Tibial artery (tissue), 4 donors: ENCODE measurements at regions of chr16 and their contacts with region 1.

Region 1: DNA sequence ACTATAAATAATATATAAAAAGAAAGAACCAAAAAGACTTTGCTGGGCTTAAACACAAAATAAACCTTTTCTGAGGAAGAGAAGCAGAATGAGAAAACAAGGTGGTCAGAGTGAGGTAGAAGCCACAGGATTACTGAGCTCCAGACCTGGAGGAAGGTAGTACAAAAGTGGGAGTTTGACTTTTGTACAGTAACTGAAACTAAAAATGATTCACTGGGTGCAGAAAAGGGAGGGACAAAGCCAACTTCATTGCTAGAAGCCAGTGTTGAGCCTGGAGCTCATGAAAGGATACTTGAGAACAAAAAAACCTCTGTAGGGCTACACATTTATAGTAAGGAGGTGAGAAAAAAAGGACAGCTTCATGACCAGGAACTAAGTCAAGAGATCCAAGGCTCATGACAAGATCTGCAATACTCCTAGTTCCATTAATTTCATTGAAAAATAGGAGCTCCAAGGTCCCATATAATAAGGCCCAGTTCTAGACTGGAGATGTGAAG is 45.5 kb downstream of the PKD1L3 start:
- DNase-seq: no peak
- H3K4me3 ChIP-seq: no peak overlapping the region
- H3K27ac ChIP-seq: no peak overlapping the region
- H3K4me1 ChIP-seq: no peaks in the 10 kb centered on the region
- H3K27me3 ChIP-seq: no peaks in the 10 kb centered on the region
- CTCF ChIP-seq: no peak

Region 2: GRCh38 chr16:71762186-71762585 is 192.6 kb before region 1 on chr16:
- intact Hi-C with region 1: no loop called
- DNase-seq: no peak
- H3K4me3 ChIP-seq: no peak overlapping the region
- H3K27ac ChIP-seq: no peak overlapping the region
- H3K4me1 ChIP-seq: peaks cover 0 to 13% (median 9%) of the 10 kb centered on the region in 4 donors
- H3K27me3 ChIP-seq: no peaks in the 10 kb centered on the region
- CTCF ChIP-seq: no peak

Region 3: GRCh38 chr16:71912534-71913253 is 42.1 kb before region 1 on chr16:
- intact Hi-C with region 1: loop called (anchors 2 kb)
- DNase-seq: no peak
- H3K4me3 ChIP-seq: no peak overlapping the region
- H3K27ac ChIP-seq: no peak overlapping the region
- H3K4me1 ChIP-seq: peaks cover 0 to 80% (median 23%) of the 10 kb centered on the region in 4 donors
- H3K27me3 ChIP-seq: no peaks in the 10 kb centered on the region
- CTCF ChIP-seq: no peak